ENCODE measurements at regions of chr15 and their contacts with region 1.

Region 1: DNA sequence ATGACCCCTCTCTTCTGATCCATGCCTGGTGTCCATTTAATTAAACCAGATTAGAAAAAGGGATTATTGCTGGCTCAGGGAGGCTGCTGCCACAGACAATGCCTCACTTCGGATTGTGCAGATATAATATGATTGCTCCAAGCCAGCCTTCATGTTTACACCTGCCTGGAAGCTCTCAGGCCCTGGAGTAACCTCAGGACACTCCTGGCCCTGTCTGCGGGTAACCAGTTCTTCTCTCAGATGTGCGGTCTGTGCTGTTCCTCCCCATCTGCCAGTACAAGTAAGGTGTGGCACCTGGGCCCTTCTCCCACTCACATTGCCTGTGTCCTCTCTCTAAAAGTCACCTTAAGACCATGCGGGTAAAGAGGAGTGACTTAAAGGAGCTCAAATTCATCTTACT is 8.8 kb upstream of the GOLGA8J start:
- DNase-seq: no peak
- ATAC-seq: no peak
- H3K4me3 ChIP-seq: no peak overlapping the region
- H3K27ac ChIP-seq: no peak overlapping the region
- H3K4me1 ChIP-seq: no peaks in the 10 kb centered on the region
- H3K27me3 ChIP-seq: peaks cover 3 to 6% (median 4%) of the 10 kb centered on the region in 3 donors
- CTCF ChIP-seq: no peak

Region 2: GRCh38 chr15:29668120-29668602 is 405.8 kb before region 1 on chr15:
- intact Hi-C with region 1: loop called in 1 of 2 experiments (anchors 10 kb)
- DNase-seq: peak in 1 of 2 donors; percentile 31
- ATAC-seq: peak in 1 of 4 donors; percentile 49
- H3K4me3 ChIP-seq: no peak overlapping the region
- H3K27ac ChIP-seq: no peak overlapping the region
- H3K4me1 ChIP-seq: no peaks in the 10 kb centered on the region
- H3K27me3 ChIP-seq: peaks cover 0 to 6% (median 0%) of the 10 kb centered on the region in 3 donors
- CTCF ChIP-seq: peak; percentile 58

Region 3: GRCh38 chr15:29698030-29698701 is 375.7 kb before region 1 on chr15:
- intact Hi-C with region 1: no loop called
- DNase-seq: no peak
- ATAC-seq: peak in 3 of 4 donors; percentile 40 to 51 (median 42)
- H3K4me3 ChIP-seq: no peak overlapping the region
- H3K27ac ChIP-seq: no peak overlapping the region
- H3K4me1 ChIP-seq: no peaks in the 10 kb centered on the region
- H3K27me3 ChIP-seq: no peaks in the 10 kb centered on the region
- CTCF ChIP-seq: no peak

Region 4: DNA sequence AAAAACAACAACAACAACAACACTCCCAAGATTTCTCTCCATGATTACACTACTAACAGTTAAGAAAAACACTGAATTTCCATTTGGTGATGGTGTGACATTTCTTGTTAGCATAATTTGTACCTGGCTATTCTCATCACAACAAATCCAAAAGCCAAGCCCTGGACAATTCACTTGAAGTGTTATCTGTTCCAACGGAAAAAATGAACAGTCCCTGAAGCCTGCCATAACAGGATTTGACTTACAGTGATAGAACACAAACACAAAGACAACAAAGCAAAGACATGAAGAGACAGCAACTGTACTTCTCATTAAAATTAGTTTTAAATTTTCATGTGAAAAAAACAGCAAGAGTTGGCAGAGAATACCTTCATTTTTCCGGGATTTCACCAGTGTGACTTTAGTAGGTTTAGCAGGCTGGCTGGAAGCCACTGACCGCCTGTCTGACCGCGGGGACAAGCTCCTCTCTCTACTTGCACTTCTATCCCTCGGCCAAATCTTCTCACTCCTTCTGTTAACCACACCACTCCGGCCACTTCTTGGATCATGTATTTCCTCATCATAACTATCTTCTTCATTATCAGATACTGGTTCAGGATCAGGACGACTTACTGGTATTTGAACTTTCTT is 307.9 kb before region 1 on chr15:
- intact Hi-C with region 1: loop called in 1 of 2 experiments (anchors 10 kb)
- DNase-seq: peak in 1 of 2 donors; percentile 33
- ATAC-seq: peak in 1 of 4 donors; percentile 26
- H3K4me3 ChIP-seq: no peak overlapping the region
- H3K27ac ChIP-seq: no peak overlapping the region
- H3K4me1 ChIP-seq: no peaks in the 10 kb centered on the region
- H3K27me3 ChIP-seq: no peaks in the 10 kb centered on the region
- CTCF ChIP-seq: no peak

Region 5: DNA sequence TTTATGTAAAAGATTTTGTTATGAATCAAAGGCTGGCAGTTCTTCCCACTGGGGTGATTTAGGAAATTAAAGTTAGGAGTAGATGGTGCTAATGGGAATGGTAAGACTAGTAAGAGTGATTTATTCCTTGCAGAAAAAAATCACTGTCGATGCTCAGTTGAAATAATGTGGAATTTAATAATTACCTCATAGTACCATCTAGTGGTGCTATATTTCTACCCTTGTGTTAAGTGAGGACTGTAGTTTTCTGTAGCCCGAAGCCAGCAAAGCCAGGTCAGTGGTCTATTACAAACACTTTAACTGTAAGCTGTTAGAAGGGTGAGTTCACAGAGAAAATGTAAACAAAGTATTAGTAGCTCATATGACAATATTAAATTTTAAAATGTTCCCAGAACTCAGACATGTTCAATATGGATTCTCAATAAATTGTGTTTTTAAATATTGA is 30.7 kb before region 1 on chr15:
- intact Hi-C with region 1: no loop called
- DNase-seq: no peak
- ATAC-seq: no peak
- H3K4me3 ChIP-seq: no peak overlapping the region
- H3K27ac ChIP-seq: no peak overlapping the region
- H3K4me1 ChIP-seq: no peaks in the 10 kb centered on the region
- H3K27me3 ChIP-seq: peaks cover 0 to 7% (median 3%) of the 10 kb centered on the region in 3 donors
- CTCF ChIP-seq: no peak

Measured in psoas muscle (tissue), 8 donors.